BJ (cell line): ENCODE measurements at regions of chr22 and their contacts with region 1.

Region 1: GRCh38 chr22:29359469-29359868 is 28.9 kb downstream of the AP1B1 start:
- DNase-seq: no peak
- H3K4me3 ChIP-seq: no peak overlapping the region
- H3K27me3 ChIP-seq: no peaks in the 10 kb centered on the region
- CTCF ChIP-seq: peak; percentile 91

Region 2: GRCh38 chr22:29306175-29306834 is 53.2 kb before region 1 on chr22 and contains the start of gene GAS2L1:
- CTCF ChIA-PET with region 1: interaction called, 69 read pairs
- POLR2A ChIA-PET with region 1: no interaction called
- DNase-seq: no peak
- H3K4me3 ChIP-seq: peak within 1 kb of the TSS; percentile 80
- H3K27me3 ChIP-seq: no peaks in the 10 kb centered on the region
- CTCF ChIP-seq: peak; percentile 85
- polyA plus RNA-seq, gene GAS2L1: 12.4 and 17.0 TPM in 2 replicates

Region 3: GRCh38 chr22:29315286-29316131 is 44.0 kb before region 1 on chr22 and contains the start of gene RASL10A:
- CTCF ChIA-PET with region 1: interaction called, 10 read pairs
- POLR2A ChIA-PET with region 1: no interaction called
- DNase-seq: no peak
- H3K4me3 ChIP-seq: peak within 1 kb of the TSS; percentile 19
- H3K27me3 ChIP-seq: peaks cover 18% of the 10 kb centered on the region
- CTCF ChIP-seq: no peak
- polyA plus RNA-seq, gene RASL10A: 0.16 TPM in 1 of 2 replicates, not detected in the other

Region 4: DNA sequence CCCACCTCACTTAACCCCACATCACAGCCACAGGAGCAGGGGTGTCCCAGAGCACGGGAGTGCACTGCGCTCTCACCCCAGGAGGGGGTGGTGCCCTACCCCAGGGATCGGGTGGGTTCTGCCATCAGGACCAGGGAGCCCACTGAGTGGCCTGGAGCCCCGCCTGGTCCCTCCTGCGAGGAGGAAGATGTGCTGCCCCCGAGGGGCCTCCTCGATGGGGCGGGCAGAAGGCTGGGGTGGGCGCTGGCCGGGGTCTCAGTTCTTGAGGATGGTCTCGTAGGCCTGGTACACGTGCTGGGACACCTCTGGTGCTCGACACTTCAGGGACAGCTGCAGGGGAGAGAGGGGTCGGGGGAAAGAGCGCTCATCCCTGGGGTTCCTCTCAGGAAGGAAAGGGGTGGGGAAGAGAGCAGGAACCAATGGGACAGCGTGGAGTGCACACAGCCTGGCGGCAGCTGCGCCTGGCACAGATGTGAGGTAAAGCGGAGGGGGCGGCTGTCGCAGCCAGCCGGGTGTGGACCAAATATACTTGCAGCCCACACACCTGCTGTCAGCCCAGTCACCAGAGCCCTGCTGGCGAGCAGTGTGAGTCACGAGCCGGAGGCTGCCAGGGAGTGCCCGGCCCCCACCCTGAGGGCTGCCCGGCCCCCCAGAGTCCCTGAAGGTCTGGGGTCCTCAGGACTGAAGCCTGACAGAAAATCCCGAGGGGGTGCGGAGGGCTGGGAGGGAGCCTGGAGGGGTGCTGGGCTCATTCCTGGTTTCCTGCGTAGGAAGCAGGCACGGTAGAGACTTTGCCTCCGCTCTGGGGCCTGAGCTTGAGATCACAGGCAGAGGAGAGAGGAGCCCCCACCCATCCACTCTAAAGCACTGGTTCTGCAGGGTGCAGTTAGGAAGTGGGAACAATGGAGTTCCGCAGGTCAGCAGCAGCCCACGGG is 30.6 kb before region 1 on chr22:
- CTCF ChIA-PET with region 1: interaction called, 14 read pairs
- POLR2A ChIA-PET with region 1: no interaction called
- DNase-seq: no peak
- H3K4me3 ChIP-seq: no peak overlapping the region
- H3K27me3 ChIP-seq: no peaks in the 10 kb centered on the region
- CTCF ChIP-seq: no peak

Region 5: GRCh38 chr22:29346659-29347058 is 12.8 kb before region 1 on chr22:
- CTCF ChIA-PET with region 1: interaction called, 32 read pairs
- POLR2A ChIA-PET with region 1: no interaction called
- DNase-seq: no peak
- H3K4me3 ChIP-seq: no peak overlapping the region
- H3K27me3 ChIP-seq: no peaks in the 10 kb centered on the region
- CTCF ChIP-seq: no peak